Pancreas (tissue), 10 donors: ENCODE measurements at regions of chr16 and their contacts with region 1.

Region 1: DNA sequence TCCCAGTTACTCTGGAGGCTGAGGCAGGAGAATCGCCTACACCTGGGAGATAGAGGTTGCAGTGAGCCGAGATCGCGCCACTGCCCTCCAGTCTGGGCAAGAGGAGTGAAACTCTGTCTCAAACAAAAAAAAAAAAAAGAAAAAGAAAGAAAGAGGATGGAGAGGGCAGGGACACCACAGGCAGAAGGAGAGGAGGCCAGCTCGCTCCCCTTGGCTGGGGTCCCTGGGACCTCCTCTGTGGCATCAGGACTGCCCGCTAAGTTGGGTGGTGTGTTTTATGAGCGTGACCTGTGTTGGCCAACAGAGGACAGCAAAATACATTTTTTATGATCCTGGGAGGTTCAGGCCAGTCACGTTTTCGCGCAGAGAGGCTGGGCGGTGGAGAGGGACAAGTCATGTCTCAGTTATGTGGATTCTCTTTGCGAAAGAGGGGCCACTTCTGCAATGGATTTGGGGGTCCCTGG is 229.6 kb downstream of the MRTFB start:
- DNase-seq: peak; percentile 74 to 88 (median 79)
- ATAC-seq: peak; percentile 66 to 86 (median 77)
- H3K4me3 ChIP-seq: peak overlapping the region in 2 of 4 donors; percentile 74 to 98
- H3K27ac ChIP-seq: peak overlapping the region; percentile 52 to 86 (median 80)
- H3K4me1 ChIP-seq: peaks cover 0 to 6% (median 0%) of the 10 kb centered on the region in 3 donors
- H3K27me3 ChIP-seq: no peaks in the 10 kb centered on the region
- CTCF ChIP-seq: peak in 3 of 4 donors; percentile 29 to 51 (median 37)

Region 2: GRCh38 chr16:14354551-14355351 is 54.0 kb after region 1 on chr16:
- intact Hi-C with region 1: no loop called
- DNase-seq: no peak
- ATAC-seq: peak in 3 of 4 donors; percentile 11 to 78 (median 57)
- H3K4me3 ChIP-seq: no peak overlapping the region
- H3K27ac ChIP-seq: no peak overlapping the region
- H3K4me1 ChIP-seq: no peaks in the 10 kb centered on the region
- H3K27me3 ChIP-seq: no peaks in the 10 kb centered on the region
- CTCF ChIP-seq: no peak

Region 3: DNA sequence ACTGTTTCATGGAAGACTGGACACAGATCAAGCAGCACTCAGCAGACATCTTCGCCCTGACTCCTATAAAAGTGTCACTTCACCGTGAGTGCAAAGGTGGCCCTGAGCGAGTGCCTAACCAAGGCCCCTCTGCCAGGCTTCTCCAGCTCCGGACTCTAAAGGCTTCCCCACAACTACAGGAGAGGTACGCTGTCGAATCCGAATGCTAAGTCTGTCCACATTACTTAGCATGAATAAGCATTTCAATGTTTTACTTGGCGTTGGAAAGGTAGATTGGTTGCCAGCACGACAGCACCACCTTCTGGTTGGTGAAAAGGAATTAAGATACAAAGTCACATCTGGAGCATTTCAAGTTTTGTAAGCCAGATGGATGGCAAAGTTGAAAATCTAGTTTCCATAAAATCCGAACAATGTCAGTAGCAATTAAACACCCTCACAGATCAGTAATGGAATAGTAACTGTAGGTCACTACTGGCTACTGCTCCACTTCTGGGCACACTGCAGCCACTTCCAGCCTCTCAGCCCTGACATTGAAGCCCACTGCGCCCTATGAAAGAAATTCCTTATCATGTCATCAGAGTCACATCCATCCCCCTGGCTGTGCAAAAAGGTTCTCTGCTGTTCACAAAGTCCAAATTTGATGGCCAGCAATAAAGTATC is 228.4 kb after region 1 on chr16:
- intact Hi-C with region 1: loop called (anchors 5 to 10 kb)
- DNase-seq: peak in 5 of 6 donors; percentile 68 to 86 (median 75)
- ATAC-seq: peak; percentile 84 to 94 (median 92)
- H3K4me3 ChIP-seq: peak overlapping the region in 1 of 4 donors; percentile 26
- H3K27ac ChIP-seq: no peak overlapping the region
- H3K4me1 ChIP-seq: peaks cover 21 to 26% (median 23%) of the 10 kb centered on the region in 3 donors
- H3K27me3 ChIP-seq: no peaks in the 10 kb centered on the region
- CTCF ChIP-seq: peak; percentile 34 to 61 (median 58)

Region 4: GRCh38 chr16:14534546-14534945 is 233.8 kb after region 1 on chr16:
- intact Hi-C with region 1: loop called (anchors 5 to 10 kb)
- DNase-seq: no peak
- ATAC-seq: no peak
- H3K4me3 ChIP-seq: no peak overlapping the region
- H3K27ac ChIP-seq: no peak overlapping the region
- H3K4me1 ChIP-seq: peaks cover 0 to 2% (median 0%) of the 10 kb centered on the region in 3 donors
- H3K27me3 ChIP-seq: no peaks in the 10 kb centered on the region
- CTCF ChIP-seq: no peak